ENCODE measurements at regions of chrX and their contacts with region 1.

Region 1: DNA sequence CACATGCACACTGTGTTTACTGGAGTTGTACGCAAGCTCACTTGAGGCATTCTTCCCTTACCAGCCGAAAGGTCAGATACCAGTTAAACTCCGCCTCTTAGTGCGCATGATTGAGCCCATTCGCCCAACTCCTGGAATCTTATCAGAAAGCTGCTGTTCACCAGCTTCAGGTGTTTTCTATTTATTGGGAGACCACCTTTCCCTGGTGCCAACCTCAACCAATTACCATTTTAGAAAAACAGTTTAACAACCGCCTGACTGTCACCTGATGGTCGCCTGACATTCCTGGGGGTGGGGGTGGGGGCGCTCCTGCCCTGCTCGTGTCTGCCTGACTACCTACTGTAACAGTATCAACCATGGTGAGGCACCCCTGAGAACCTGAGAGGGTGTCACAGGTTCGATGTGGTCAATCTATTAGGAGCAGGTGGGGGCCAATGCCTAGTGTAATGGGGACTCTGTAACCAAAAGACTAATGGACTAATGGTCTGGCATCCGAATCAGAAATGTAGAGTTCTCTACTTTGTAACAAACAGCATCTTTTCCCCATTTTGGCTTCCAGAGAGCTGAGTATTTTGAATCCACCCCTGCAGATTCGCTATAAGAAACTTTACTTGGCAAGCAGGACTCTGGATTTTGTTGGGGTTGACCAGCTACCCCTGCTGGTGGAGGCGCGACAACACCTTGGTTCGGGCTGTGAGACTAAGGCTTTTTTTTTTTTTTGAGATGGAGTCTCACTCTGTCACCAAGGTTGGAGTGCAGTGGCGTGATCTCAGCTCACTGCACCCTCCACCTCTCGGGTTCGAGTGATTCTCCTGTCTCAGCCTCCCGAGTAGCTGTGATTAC is 58.2 kb upstream of the ZNF157 start:
- DNase-seq: peak; percentile 74
- ATAC-seq: peak; percentile 65
- H3K4me3 ChIP-seq: peak overlapping the region; percentile 51; the same call in 1 of the 2 replicates
- H3K27ac ChIP-seq: peak overlapping the region; percentile 32; the same call in 1 of the 2 replicates
- H3K4me1 ChIP-seq: peaks cover 4% of the 10 kb centered on the region; the same call in 1 of the 2 replicates
- H3K27me3 ChIP-seq: no peaks in the 10 kb centered on the region
- CTCF ChIP-seq: peak; percentile 75

Region 2: GRCh38 chrX:47217642-47218279 is 94.4 kb before region 1 on chrX:
- CTCF ChIA-PET with region 1: interaction called, 3 read pairs
- POLR2A ChIA-PET with region 1: no interaction called
- intact Hi-C with region 1: loop called (anchors 5 kb)
- DNase-seq: peak; percentile 98
- ATAC-seq: peak; percentile 83
- H3K4me3 ChIP-seq: peak overlapping the region; percentile 93
- H3K27ac ChIP-seq: peak overlapping the region; percentile 96
- H3K4me1 ChIP-seq: peaks cover 34% of the 10 kb centered on the region
- H3K27me3 ChIP-seq: no peaks in the 10 kb centered on the region
- CTCF ChIP-seq: no peak

Region 3: DNA sequence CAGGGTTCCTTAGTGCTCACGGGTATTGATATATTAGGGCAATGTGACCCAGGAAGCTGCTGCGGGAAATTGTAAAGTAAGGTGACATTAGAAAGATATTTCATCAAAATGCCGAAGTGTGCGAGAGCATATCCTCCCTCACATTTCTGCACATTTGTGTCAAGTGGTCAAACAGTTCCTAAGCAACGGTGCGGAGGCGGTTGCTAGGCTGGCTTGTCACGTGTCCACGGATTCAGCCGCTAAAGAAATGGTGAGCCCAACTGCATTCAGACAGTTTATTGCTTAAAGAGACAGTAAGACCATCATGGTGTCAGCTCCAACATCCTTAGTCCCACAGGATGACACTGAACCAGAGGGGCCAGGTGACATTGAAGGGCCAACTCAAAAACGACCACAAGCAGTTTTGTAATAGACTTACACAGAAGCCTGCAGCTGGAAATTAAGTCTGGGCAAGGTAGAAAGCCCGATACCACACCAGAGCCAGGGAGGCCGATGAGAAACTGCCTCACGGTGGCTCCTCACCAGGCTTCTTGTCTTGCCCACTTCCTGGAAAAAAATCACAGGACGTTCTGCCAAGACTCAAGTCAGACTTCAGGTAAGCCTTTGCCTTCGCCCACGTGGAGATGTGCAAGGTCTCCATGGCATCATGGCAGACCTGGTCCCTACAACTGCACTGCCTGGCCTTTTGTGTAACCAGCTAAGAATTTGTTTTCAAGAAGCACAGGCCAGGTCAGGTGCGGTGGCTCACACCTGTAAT is 29.0 kb before region 1 on chrX:
- CTCF ChIA-PET with region 1: no interaction called
- POLR2A ChIA-PET with region 1: no interaction called
- intact Hi-C with region 1: no loop called
- DNase-seq: no peak
- ATAC-seq: no peak
- H3K4me3 ChIP-seq: no peak overlapping the region
- H3K27ac ChIP-seq: no peak overlapping the region
- H3K4me1 ChIP-seq: peaks cover 5% of the 10 kb centered on the region
- H3K27me3 ChIP-seq: no peaks in the 10 kb centered on the region
- CTCF ChIP-seq: no peak